ENCODE measurements at regions of chr4 and their contacts with region 1.

Region 1: GRCh38 chr4:69881173-69881773 is 21.3 kb upstream of the SULT1E1 start:
- DNase-seq: peak in 1 of 3 donors; percentile 30
- ATAC-seq: peak; percentile 93
- H3K4me3 ChIP-seq: no peak overlapping the region
- H3K4me1 ChIP-seq: no peaks in the 10 kb centered on the region
- CTCF ChIP-seq: peak; percentile 67

Region 2: DNA sequence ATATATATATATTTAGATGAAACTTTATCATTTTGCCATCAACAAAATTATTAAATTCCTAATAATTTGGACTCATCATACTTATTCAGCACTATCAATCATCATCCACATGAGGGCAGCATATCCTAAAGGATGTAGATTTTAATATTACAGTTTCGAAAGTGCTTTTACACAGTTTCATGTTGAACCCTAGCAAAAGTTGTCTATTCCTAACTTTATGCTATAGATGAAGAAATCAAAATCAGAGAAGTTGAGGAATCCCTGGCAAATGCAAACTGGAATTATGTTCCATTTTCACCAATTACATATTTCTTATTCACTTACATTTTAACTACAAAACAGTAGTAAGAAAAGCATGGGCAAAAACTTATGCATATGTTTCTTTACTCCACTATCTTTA is 191.7 kb before region 1 on chr4:
- intact Hi-C with region 1: loop called in 1 of 2 experiments (anchors 2 kb)
- DNase-seq: peak in 1 of 3 donors; percentile 26
- ATAC-seq: peak; percentile 54
- H3K4me3 ChIP-seq: no peak overlapping the region
- H3K4me1 ChIP-seq: no peaks in the 10 kb centered on the region
- CTCF ChIP-seq: peak; percentile 22

Region 3: DNA sequence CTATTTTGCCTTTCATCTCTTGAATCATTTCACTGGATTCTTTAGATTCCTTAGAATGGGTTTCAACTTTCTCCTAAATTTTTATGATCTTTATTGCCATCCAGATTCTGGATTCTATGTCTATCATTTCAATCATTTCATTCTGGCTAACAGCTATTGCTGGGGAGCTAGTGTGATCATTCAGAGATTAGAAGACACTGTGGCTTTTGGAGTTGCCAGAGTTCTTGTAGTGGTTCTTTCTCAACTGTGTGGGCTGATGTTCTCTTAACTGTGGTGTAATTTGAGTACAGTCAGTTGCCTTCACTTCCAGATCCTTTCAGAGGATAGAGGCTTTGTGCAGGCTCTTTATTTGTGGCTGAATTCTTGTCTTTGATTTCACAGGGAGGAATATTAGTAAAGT is 96.3 kb after region 1 on chr4:
- intact Hi-C with region 1: no loop called
- DNase-seq: no peak
- ATAC-seq: no peak
- H3K4me3 ChIP-seq: no peak overlapping the region
- H3K4me1 ChIP-seq: no peaks in the 10 kb centered on the region
- CTCF ChIP-seq: no peak

Region 4: GRCh38 chr4:69999420-69999819 is 118.1 kb after region 1 on chr4:
- intact Hi-C with region 1: no loop called
- DNase-seq: no peak
- ATAC-seq: no peak
- H3K4me3 ChIP-seq: no peak overlapping the region
- H3K4me1 ChIP-seq: no peaks in the 10 kb centered on the region
- CTCF ChIP-seq: no peak

Measured in mucosa of descending colon (tissue), 3 donors.